ENCODE measurements at regions of chr14 and their contacts with region 1.

Region 1: DNA sequence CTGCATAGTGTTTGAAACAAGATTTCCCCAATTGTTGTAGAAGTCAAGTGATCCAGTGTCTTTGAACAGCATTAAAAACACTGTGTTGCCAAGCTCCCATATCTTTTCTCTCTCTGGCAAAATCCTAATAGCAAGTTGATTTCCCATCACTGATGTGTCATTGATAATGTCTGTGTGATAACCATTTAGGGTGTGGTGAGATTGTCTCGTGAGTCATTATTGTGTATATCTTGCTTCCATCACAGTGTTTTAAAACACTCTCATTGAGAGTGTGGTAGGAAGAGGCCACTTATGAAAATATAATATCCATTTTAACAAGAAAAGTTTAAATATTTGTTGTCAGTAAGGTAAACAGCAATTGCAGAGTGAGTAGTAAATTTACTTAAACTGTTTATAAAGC is 74.7 kb downstream of the PRORP start:
- DNase-seq: no peak
- H3K4me3 ChIP-seq: no peak overlapping the region
- CTCF ChIP-seq: no peak

Region 2: DNA sequence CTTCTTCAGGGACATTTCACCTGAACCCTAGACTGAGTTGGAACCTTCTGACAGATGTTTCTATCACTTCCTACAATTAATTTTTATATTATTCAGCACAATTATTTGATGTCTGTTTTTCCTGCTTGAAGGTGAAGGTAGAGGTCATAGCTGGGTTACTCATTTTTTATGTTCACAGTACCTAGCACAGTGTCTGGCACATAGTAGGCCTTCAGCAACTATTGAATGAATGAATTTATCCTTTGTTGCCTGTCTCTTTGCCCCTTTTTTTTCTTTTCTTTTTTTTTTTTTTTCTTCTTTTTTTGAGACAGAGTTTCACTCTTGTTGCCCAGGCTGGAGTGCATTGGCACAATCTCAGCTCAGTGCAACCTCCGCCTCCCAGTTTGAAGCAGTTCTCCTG is 180.4 kb before region 1 on chr14:
- in situ Hi-C with region 1: no loop called
- DNase-seq: no peak
- H3K4me3 ChIP-seq: no peak overlapping the region
- CTCF ChIP-seq: no peak

Region 3: DNA sequence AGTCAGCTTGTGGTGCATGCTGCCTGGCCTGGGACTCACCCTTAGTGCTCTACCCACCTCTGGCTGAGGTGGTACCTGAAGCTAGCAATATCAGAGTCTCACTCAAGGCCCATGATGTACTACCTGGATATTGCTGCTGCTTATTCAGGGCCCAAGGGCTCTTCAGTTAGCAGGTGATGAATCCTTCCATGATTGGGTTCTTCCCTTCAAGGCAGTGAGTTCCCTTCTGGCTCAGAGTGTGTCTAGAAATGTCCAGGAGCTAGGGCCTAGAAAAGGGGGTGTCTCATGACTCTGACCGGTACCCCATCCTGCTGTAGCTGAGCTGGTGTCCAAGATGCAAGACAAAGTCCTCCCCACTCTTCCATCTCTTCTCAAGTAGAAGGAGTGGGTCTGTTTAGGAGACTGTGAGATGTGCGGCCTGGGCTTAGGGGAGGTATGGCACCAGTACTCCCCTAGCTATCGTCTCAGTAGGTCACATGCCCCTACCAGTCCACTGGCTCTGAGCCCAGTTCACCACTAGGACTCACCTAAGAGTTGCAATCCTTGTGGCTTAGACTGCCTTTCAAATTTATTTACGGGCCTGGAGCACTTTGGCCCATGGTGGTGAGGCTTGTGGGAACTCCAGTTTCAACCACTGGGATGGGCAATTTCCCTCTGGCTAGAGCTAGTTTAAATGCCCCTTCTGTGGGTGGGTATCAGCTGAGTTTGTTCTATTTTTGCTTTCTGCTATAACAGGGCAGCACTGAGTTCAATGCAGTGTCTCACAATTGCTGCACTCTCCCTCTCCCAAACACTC is 62.5 kb before region 1 on chr14:
- in situ Hi-C with region 1: no loop called
- DNase-seq: no peak
- H3K4me3 ChIP-seq: no peak overlapping the region
- CTCF ChIP-seq: no peak

Region 4: GRCh38 chr14:35146711-35147149 is 50.3 kb before region 1 on chr14:
- in situ Hi-C with region 1: no loop called
- DNase-seq: no peak
- H3K4me3 ChIP-seq: no peak overlapping the region
- CTCF ChIP-seq: no peak

Region 5: GRCh38 chr14:35254736-35255135 is 57.7 kb after region 1 on chr14:
- in situ Hi-C with region 1: loop called (anchors 5 kb)
- DNase-seq: no peak
- H3K4me3 ChIP-seq: no peak overlapping the region
- CTCF ChIP-seq: no peak

Measured in astrocyte of the cerebellum (primary cell).